ENCODE measurements at regions of chr4 and their contacts with region 1.

Region 1: GRCh38 chr4:183840311-183840710 is 64.8 kb upstream of the STOX2 start:
- DNase-seq: peak; percentile 85
- H3K4me3 ChIP-seq: no peak overlapping the region
- H3K27ac ChIP-seq: no peak overlapping the region
- H3K4me1 ChIP-seq: peaks cover 0 to 38% (median 9%) of the 10 kb centered on the region in 6 donors
- H3K27me3 ChIP-seq: peaks cover 0 to 7% (median 0%) of the 10 kb centered on the region in 7 donors
- CTCF ChIP-seq: peak; percentile 40 to 85 (median 74)
- POLR2A ChIP-seq: no peak

Region 2: DNA sequence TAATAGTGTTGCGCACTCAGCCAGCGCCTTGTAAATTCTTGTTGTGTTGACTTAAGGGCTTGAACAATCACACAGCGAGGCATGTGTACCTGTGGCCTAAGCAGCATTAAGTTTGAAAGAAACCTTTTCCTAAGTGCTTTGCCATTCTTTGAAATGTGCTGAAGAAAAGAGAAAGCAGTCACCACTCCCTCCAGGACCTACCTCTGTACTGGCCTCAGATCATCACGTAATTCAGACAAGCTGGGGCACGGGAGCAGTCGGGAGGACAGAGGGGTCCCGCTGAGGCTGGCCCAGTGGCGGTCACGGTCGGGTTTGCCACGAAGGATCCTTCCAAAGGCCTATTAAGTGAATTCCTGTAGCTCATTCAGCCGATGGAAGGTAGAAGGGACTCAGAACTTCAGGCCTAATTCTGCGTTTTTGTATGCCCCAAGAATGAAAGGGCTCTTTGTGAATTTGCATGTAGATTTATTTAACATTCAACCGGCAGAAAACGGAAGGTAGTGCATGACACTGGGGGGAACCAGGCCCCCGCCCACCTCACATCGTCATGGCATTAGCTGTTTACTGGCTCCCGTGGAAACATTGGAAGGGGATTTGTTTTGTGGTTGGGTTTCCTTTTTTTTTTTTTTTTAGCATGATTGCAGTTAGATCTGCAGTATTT is 74.9 kb before region 1 on chr4:
- intact Hi-C with region 1: no loop called
- DNase-seq: no peak
- H3K4me3 ChIP-seq: peak overlapping the region in 3 of 8 donors; percentile 15 to 32 (median 30)
- H3K27ac ChIP-seq: peak overlapping the region; percentile 3 to 92 (median 79)
- H3K4me1 ChIP-seq: peaks cover 0 to 16% (median 0%) of the 10 kb centered on the region in 6 donors
- H3K27me3 ChIP-seq: no peaks in the 10 kb centered on the region
- CTCF ChIP-seq: no peak
- POLR2A ChIP-seq: no peak

Region 3: DNA sequence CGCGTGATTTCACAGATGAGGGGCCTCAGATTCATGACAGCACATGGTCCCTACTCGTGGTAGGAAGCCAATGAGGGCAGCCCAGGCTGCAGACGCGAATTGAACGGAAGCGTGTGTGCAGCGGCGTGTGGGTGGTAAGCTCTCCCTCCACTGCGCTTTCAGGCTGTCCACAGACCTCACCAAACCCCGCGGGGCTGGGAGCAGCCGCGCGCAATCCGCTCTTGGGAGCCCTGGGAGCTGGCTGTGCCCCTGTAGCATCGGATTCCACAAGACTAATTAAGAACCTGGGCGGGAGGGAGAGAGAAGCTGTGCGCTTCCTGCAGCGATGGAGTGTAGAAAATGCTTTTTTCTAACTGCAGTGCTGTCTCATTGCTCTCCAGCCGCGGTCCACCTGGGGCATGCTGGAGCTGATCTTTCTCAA is 199.7 kb after region 1 on chr4:
- intact Hi-C with region 1: no loop called
- DNase-seq: no peak
- H3K4me3 ChIP-seq: peak overlapping the region in 3 of 8 donors; percentile 1 to 36 (median 10)
- H3K27ac ChIP-seq: no peak overlapping the region
- H3K4me1 ChIP-seq: peaks cover 0 to 10% (median 0%) of the 10 kb centered on the region in 6 donors
- H3K27me3 ChIP-seq: peaks cover 0 to 38% (median 6%) of the 10 kb centered on the region in 7 donors
- CTCF ChIP-seq: no peak
- POLR2A ChIP-seq: no peak

Region 4: DNA sequence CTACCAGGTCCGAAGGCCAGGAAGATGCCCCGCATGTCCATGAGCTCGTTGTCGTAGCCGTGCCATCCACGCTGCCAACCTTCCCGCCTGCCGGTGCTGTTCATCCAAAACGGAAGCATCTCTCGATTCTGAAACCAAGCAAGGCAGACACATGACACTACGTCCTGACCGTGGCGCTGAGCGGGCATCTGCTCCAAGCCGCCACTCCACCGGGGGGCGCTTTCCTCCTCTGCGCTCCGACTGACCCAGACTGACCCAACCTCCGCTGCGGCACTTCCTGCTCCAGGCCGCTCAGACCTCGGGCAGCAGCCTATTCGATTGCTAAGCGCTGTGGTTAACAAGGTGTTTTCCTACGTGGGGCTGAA is 256.9 kb after region 1 on chr4:
- intact Hi-C with region 1: loop called (anchors 5 kb)
- DNase-seq: peak; percentile 89
- H3K4me3 ChIP-seq: peak overlapping the region; percentile 9 to 63 (median 15)
- H3K27ac ChIP-seq: peak overlapping the region in 7 of 8 donors; percentile 2 to 70 (median 59)
- H3K4me1 ChIP-seq: peaks cover 0 to 15% (median 9%) of the 10 kb centered on the region in 6 donors
- H3K27me3 ChIP-seq: peaks cover 0 to 12% (median 0%) of the 10 kb centered on the region in 7 donors
- CTCF ChIP-seq: peak in 10 of 11 experiments; percentile 29 to 64 (median 54)
- POLR2A ChIP-seq: no peak

Region 5: DNA sequence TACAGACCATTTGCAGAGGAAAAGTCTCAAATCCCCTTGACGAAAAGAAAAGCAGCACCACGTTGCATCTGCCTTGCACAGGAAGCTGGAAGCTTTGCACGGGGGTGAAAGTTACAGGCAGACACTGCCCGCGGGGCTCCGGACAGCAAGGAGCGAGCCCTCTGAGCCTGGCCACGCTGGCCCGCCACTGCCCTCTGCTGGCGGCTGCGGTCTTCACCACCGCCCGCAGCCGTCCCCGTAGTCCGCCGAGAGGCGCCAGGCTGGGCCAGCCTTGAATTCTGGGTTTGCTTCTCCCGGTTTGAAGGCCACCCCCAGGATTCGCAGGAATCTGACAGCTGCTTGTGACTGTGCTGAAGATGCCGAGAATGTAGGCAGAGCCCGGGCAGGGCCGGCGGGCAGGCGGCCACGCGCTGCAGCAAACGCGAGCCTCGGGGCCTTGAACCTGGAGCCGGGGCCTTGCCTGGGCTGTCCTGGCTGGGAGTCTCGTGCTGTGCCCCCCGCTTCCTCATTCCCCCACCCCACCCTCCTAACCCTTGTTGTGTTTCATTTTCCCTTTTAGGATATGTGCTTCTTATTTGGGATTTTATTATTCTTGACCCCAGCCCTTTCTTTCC is 328.2 kb after region 1 on chr4:
- intact Hi-C with region 1: loop called (anchors 5 kb)
- DNase-seq: peak; percentile 93
- H3K4me3 ChIP-seq: peak overlapping the region in 2 of 8 donors; percentile 19 to 50
- H3K27ac ChIP-seq: peak overlapping the region in 2 of 8 donors; percentile 9 to 26
- H3K4me1 ChIP-seq: peaks cover 3 to 14% (median 10%) of the 10 kb centered on the region in 6 donors
- H3K27me3 ChIP-seq: peaks cover 0 to 50% (median 0%) of the 10 kb centered on the region in 7 donors
- CTCF ChIP-seq: peak; percentile 65 to 96 (median 91)
- POLR2A ChIP-seq: no peak